ENCODE measurements at regions of chr4 and their contacts with region 1.

Region 1: DNA sequence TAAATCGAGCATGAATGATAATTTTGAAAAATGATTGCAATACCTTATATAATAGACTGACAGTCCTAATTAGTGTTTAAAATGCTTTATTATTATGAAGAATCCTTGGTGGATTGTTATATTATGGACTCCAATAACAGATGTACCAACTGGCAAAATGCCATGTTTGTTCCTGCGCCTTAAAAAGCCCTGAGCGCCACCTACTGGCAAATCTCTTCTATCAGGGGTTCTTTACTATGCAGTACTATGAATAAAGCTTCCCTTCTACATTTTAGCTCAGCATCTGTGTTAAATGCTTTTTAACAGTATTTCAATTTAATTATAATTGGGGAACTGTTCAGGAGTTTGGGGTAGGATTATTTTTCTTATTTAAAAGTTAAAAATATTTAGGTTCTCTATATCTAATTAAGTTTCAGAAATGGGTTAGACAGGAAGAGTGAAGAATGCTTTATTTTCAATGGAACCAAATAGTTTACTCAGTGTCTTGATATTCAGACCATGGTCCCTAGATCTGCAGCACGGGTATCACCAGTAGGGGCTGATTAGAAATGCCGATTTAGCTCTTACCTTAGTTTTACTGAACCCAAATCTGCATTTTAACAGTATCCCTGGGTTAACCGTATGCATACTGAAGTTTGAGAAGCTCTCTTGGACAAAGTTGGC is 20.1 kb downstream of the CFAP97 start:
- DNase-seq: peak; percentile 45 to 89 (median 74)
- H3K4me3 ChIP-seq: peak overlapping the region in 2 of 59 donors; percentile 8 to 19
- H3K27ac ChIP-seq: peak overlapping the region in 5 of 59 donors; percentile 2 to 22 (median 11)
- H3K27me3 ChIP-seq: no peaks in the 10 kb centered on the region
- CTCF ChIP-seq: peak; percentile 75 to 97 (median 90)

Region 2: GRCh38 chr4:184782731-184783373 is 400.9 kb before region 1 on chr4:
- intact Hi-C with region 1: no loop called
- DNase-seq: no peak
- H3K4me3 ChIP-seq: no peak overlapping the region
- H3K27ac ChIP-seq: no peak overlapping the region
- H3K27me3 ChIP-seq: no peaks in the 10 kb centered on the region
- CTCF ChIP-seq: no peak

Region 3: DNA sequence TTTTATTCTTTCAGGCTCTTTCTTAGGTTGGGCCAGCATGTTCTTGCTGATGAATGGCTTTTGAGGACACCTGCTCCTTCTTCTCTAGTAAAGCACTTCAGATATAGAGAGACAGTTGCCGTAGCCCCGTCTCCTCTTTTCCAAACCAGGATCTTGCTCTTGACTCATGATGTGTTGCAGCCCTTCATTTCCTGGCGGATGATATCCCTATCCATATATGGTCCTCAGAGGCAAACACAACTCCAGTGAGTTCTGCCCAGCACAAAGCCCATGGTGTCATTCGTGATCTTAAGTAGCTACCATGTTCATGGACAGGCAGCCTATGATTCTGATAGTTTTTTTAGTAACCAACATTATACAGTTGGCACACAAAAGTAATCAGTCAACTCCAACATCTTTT is 298.1 kb before region 1 on chr4:
- intact Hi-C with region 1: no loop called
- DNase-seq: no peak
- H3K4me3 ChIP-seq: no peak overlapping the region
- H3K27ac ChIP-seq: no peak overlapping the region
- H3K27me3 ChIP-seq: no peaks in the 10 kb centered on the region
- CTCF ChIP-seq: no peak

Region 4: DNA sequence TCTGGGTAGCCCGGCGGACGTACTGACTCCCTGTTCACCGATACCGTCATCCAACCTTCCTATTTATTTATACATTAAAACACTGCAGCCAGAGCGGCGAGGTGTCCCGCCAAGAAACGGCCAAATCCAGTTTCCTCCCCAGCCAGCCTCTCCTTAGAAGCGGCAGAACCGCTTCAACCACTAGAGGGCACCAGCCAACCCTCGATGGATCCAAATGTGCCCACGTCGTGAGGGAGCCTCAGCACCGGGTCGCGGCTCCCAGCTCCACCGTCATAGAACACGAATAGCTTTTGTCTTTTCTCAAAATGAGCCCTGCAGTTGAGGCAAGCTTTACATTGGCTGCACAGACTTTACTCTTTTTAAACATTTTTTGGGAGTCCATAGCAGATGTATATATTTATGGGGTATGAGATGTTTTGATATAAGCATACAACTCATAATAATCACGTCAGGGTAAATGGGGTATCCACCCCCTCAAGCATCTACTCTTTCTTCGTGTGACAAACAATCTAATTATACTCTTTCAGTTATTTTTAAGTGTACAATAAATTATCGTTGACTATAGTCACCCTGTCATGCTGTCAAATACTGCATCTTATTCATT is 178.4 kb before region 1 on chr4:
- intact Hi-C with region 1: loop called in 1 of 2 experiments (anchors 10 kb)
- DNase-seq: peak; percentile 63 to 85 (median 79)
- H3K4me3 ChIP-seq: peak overlapping the region; percentile 1 to 69 (median 43)
- H3K27ac ChIP-seq: no peak overlapping the region
- H3K27me3 ChIP-seq: peaks cover 0 to 10% (median 0%) of the 10 kb centered on the region in 45 donors
- CTCF ChIP-seq: peak; percentile 68 to 96 (median 89)

Region 5: GRCh38 chr4:185039508-185040273 is 144.1 kb before region 1 on chr4:
- intact Hi-C with region 1: loop called (anchors 5 kb)
- DNase-seq: peak in 4 of 10 donors; percentile 24 to 52 (median 48)
- H3K4me3 ChIP-seq: peak overlapping the region in 20 of 59 donors; percentile 4 to 42 (median 20)
- H3K27ac ChIP-seq: no peak overlapping the region
- H3K27me3 ChIP-seq: peaks cover 0 to 22% (median 0%) of the 10 kb centered on the region in 45 donors
- CTCF ChIP-seq: peak; percentile 46 to 97 (median 83)

Region 6: DNA sequence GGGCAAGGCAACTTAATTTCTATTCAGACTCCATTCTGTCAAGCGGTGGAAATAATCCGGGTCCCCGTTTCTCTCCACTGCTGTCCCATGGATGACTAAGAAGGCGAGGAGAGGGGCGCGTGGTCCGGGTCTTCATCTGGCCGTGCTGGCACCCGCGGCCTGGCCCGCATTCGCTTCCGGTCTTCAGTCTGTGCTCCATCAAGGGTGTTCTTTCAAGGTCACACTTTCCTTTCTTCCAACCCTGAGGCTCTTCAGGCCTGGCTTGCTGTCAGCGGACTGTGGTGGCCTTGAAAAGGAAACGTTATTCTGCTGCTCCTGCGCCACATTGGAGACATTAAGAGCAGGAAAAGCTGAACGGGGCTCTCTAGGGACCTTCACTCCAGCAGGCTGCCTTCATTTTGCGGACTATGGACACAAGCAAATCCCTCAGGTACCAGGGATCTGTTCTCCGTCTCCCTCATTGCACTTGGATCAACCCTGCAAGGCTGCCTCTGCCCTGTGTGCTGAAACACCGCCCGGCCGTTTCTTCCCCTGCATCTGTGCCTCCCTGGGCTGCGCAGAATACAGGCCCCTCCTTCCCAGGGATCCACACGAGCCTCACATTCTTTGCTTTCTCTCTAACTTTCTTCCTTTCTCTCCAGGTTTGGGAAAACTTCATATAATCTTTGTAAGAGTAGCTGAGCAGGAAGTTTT is 46.4 kb before region 1 on chr4:
- intact Hi-C with region 1: loop called in 1 of 2 experiments (anchors 5 kb)
- DNase-seq: no peak
- H3K4me3 ChIP-seq: no peak overlapping the region
- H3K27ac ChIP-seq: no peak overlapping the region
- H3K27me3 ChIP-seq: no peaks in the 10 kb centered on the region
- CTCF ChIP-seq: no peak